HEK293 (cell line): ENCODE measurements at regions of chr9 and their contacts with region 1.

Region 1: DNA sequence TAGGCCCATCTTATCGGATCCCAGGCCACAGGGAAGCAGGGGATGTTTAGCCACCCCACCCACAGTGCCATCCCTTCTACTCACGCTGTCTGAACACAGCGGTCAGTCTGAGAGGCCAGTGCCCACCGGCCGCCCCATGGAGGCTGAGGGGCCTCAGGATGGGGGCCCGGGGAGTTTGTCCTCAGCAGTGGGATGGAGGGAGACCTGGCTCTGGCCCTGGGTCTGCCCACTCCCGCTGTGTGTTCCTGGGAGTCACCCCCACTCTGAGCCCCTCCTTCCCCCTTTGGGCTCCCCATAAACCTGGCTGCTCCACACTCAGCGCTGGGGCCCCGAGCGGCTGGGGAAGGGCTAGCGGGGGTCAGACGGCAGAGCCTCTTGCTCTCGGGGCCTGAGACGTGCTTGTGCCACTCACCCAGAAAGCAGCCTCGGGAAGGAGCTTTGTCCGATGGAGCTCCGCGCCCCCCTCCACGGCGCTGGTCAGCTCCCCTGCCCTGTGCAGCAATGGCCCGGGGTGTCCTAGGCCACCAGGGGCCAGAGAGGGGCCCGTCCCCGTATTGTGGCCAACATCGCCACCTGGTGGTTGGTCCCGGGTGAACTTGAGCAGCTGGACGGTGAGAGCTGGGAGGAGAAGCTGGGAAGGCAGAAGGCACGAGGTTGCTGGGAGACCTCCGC is 10.9 kb upstream of the LAMC3 start:
- H3K4me3 ChIP-seq: no peak overlapping the region
- H3K27ac ChIP-seq: no peak overlapping the region
- H3K4me1 ChIP-seq: no peaks in the 10 kb centered on the region
- CTCF ChIP-seq: peak; percentile 96

Region 2: DNA sequence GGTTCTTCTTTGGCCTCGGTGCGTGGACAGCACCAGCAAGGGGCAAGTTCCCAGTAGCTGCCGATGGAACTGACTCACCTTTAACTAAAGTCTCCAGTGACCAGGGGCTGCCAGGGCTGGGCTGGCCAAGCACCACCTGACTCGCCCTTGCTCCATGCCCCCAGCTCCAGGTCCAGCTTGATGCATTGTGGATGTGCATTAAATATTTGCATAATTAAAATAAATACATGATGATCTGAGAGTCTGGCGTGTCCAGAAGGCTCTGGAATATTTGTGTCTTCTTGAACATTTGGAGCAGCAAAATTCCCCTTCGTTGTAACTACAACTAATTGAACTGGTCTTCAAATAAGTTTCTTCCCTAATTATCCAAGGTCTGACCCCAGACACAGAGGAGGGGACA is 343.2 kb before region 1 on chr9:
- CTCF ChIA-PET with region 1: no interaction called
- POLR2A ChIA-PET with region 1: no interaction called
- H3K4me3 ChIP-seq: no peak overlapping the region
- H3K27ac ChIP-seq: no peak overlapping the region
- H3K4me1 ChIP-seq: no peaks in the 10 kb centered on the region
- CTCF ChIP-seq: no peak

Region 3: GRCh38 chr9:130701056-130702022 is 296.7 kb before region 1 on chr9:
- CTCF ChIA-PET with region 1: interaction called, 19 read pairs
- POLR2A ChIA-PET with region 1: interaction called, 3 read pairs
- H3K4me3 ChIP-seq: no peak overlapping the region
- H3K27ac ChIP-seq: no peak overlapping the region
- H3K4me1 ChIP-seq: no peaks in the 10 kb centered on the region
- CTCF ChIP-seq: peak; percentile 88

Region 4: DNA sequence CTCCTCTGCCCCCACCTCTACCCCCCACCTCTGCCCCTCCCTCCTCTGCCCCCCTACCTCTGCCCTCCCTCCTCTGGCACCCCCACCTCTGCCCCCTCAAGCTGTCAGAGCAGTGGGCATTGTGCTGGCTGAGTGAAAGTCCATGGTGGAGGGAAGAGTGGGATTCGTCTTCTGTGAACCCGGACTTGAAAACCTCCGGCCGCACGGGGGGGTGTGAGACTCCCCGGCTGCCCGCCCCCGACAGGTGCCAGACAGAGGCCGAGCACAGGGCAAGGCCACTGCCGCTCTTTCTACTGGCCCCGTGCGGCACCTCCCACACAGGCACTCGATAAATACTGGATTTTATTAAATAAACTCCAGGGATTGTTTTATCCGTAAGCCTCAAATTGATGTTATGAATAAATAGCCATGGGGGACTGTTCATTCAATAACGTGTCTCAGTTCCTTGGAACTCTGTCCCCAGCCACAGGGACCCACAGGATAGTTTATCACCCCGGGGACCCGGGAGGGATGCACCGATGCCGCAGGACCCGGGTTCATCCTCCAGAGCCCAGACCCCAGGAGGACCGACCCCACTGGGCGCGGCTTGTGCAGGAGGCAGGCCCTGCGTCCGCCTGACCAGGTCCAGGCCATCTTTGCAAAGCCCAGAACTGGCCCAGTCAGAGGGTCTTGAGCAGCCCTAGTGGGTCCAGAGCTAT is 98.9 kb before region 1 on chr9:
- CTCF ChIA-PET with region 1: interaction called, 13 read pairs
- POLR2A ChIA-PET with region 1: no interaction called
- H3K4me3 ChIP-seq: no peak overlapping the region
- H3K27ac ChIP-seq: no peak overlapping the region
- H3K4me1 ChIP-seq: no peaks in the 10 kb centered on the region
- CTCF ChIP-seq: no peak

Region 5: DNA sequence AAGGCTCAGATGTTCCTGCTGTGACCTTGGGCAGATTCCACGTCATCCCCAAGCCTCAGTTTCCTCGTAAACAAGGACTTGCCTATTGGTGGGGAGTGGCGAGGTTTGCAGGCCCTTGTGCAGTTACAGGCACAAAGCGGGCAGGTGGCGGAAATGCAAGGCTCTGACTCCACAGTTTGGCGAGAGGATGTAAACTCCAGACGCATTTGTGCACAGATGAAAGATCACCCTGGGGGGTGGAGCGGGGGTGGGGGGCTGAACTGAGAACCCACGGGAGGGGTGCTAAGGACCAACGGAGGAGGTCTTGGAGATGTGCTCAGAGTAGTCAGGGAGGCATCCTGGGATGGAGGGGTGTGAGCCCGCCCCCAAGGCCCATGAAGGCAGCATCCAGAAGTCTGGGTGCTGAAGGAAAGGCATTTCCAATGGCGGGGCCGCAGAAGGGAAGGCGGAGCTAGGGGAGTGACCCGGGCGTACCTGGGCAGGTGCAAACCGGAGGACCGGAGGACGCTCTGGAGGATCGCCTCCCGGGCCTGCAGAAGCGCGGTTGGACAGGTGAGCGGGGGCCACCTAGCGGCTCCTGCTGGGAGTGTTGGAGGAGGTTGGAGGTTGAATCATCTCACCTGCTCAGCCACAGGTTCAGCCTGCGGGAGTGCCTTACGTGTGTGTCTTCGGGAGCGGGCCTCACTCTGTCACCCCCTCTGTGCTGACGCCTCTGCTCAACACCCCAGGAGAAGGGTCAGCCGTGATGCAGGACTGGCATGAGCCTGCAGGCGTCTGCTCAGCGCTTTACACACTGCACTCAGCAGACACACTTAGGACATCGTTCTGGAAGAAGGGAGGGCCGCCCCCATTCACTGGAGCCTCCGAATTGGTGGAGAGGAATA is 57.1 kb before region 1 on chr9:
- CTCF ChIA-PET with region 1: interaction called, 16 read pairs
- POLR2A ChIA-PET with region 1: no interaction called
- H3K4me3 ChIP-seq: no peak overlapping the region
- H3K27ac ChIP-seq: no peak overlapping the region
- H3K4me1 ChIP-seq: no peaks in the 10 kb centered on the region
- CTCF ChIP-seq: peak; percentile 93

Region 6: DNA sequence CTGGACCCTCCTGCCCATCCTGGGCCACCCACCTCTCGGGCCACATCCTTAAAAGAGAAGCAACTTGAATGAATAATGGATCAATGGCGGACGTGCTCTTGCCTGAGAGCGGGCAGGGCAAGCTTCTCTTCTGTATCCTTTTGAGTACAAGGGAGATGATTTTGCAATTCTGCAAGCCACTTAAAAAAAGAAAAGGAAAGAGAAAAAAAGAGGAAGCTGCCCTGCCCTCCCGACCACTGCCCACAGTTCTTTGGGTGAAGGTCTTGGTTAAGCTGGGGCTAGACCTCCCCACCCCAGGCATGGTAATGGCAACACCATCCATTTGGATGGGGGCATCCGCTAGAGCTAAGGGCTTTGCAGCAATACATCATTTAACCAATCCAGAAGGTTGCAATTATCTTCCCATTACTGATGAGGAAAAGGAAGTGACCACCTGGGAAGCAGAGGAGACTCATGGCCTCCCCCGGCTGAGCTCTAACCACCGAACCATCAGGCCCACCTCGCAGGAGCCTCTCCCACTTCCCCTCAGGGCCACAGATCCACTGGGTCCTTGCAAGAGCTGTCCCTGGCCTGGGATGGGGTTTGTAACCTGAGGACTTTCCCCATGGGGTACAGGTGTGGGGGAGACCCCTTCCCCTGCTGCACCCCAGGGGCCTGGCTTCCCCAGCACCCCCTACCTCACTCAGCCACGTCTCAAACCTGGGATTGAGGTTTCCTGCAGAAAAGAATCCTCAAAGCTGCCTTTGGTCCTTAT is 16.9 kb before region 1 on chr9:
- CTCF ChIA-PET with region 1: interaction called, 41 read pairs
- POLR2A ChIA-PET with region 1: interaction called, 7 read pairs
- H3K4me3 ChIP-seq: no peak overlapping the region
- H3K27ac ChIP-seq: no peak overlapping the region
- H3K4me1 ChIP-seq: no peaks in the 10 kb centered on the region
- CTCF ChIP-seq: no peak

Region 7: GRCh38 chr9:131008909-131009618 is 11.0 kb after region 1 on chr9 and contains the start of gene LAMC3:
- CTCF ChIA-PET with region 1: interaction called, 60 read pairs
- POLR2A ChIA-PET with region 1: no interaction called
- H3K4me3 ChIP-seq: peak within 1 kb of the TSS; percentile 31
- H3K27ac ChIP-seq: no peak within 1 kb of the TSS
- H3K4me1 ChIP-seq: no peaks in the 10 kb centered on the region
- CTCF ChIP-seq: peak; percentile 43; the same call in 1 of the 2 replicates